HEK293 (cell line): ENCODE measurements at regions of chr12 and their contacts with region 1.

Region 1: GRCh38 chr12:106223485-106224354 is 24.1 kb downstream of the CKAP4 start:
- H3K4me3 ChIP-seq: no peak overlapping the region
- H3K27ac ChIP-seq: no peak overlapping the region
- H3K4me1 ChIP-seq: no peaks in the 10 kb centered on the region
- CTCF ChIP-seq: peak; percentile 82

Region 2: DNA sequence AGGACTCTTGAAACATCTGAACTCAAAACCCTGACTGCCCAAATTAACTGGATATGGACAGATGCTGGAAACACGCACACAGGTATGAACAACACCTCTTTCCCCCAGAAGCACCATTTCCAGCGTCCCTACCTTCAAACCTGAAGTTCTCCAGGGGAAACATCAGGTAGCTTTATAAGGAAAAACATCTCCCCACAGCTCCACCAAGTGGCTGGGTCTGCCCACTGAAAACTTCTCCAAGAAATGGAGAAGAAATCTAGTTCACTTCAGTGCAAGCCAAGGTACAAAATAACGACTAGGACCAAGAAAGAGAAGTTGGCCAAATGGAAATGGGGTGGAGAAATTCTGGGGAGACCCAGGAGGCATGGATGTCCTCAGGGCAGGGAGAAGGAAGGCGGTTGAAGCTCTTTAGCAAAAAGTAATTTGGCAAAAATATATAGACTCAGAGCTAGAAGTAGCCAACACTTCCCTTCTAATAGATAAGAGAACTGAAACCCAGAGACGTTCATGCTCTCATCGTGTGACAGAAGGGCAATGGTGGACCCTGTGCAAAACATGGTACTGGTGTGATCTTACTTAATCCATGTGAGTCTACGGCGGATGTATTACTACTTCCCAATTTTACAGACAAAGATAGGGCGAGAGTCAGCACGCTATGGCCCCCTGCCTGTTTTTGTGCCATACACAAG is 74.5 kb before region 1 on chr12:
- CTCF ChIA-PET with region 1: interaction called, 16 read pairs
- POLR2A ChIA-PET with region 1: no interaction called
- H3K4me3 ChIP-seq: no peak overlapping the region
- H3K27ac ChIP-seq: no peak overlapping the region
- H3K4me1 ChIP-seq: peaks cover 14% of the 10 kb centered on the region
- CTCF ChIP-seq: peak; percentile 53